Stomach (tissue), 19 donors: ENCODE measurements at regions of chr17 and their contacts with region 1.

Region 1: GRCh38 chr17:10844621-10845387 is 6.9 kb upstream of the PIRT start:
- DNase-seq: peak; percentile 90 to 95
- H3K4me3 ChIP-seq: peak overlapping the region; percentile 42 to 50 (median 48)
- H3K27ac ChIP-seq: peak overlapping the region; percentile 78 to 94 (median 86)
- H3K4me1 ChIP-seq: peaks cover 6 to 26% (median 23%) of the 10 kb centered on the region in 4 donors
- H3K27me3 ChIP-seq: peaks cover 0 to 4% (median 0%) of the 10 kb centered on the region in 3 donors
- CTCF ChIP-seq: peak in 6 of 7 experiments; percentile 83 to 98 (median 95)
- EP300 ChIP-seq: no peak
- POLR2A ChIP-seq: no peak

Region 2: DNA sequence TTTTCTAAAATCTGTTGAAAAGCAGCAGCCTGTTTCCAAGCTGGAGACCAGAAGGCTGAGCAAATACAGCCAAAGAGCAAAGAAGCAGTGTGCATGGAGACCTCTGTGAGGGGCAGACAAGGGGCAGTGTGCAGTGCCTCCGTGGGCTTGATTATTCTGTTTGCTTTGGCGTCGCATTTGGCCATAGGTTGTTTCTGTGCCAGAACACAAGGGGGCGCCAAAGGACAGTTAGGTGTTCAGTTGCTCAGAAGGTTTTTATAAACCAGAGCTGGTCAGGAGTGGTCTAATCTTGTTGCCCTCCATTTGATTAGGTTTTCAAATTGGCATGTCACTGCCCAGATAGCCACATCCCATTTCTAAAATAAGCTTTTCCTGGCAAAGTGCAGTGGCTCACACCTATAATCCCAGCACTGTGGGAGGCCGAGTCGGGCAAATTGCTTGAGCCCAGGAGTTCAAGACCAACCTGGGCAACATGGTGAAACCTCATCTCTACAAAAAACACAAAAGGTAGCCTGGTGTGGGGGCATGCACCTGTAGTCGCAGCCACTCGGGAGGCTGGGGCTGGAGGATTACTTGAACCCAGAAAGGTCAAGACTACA is 198.3 kb before region 1 on chr17:
- intact Hi-C with region 1: loop called (anchors 10 kb)
- DNase-seq: peak; percentile 82 to 93
- H3K4me3 ChIP-seq: no peak overlapping the region
- H3K27ac ChIP-seq: no peak overlapping the region
- H3K4me1 ChIP-seq: peaks cover 0 to 6% (median 2%) of the 10 kb centered on the region in 4 donors
- H3K27me3 ChIP-seq: no peaks in the 10 kb centered on the region
- CTCF ChIP-seq: peak in 5 of 7 experiments; percentile 74 to 84 (median 78)
- EP300 ChIP-seq: no peak
- POLR2A ChIP-seq: no peak

Region 3: GRCh38 chr17:10737168-10737622 is 107.6 kb before region 1 on chr17:
- intact Hi-C with region 1: loop called (anchors 5 kb)
- DNase-seq: peak; percentile 95 to 96
- H3K4me3 ChIP-seq: no peak overlapping the region
- H3K27ac ChIP-seq: peak overlapping the region; percentile 72 to 84 (median 75)
- H3K4me1 ChIP-seq: peaks cover 13 to 49% (median 33%) of the 10 kb centered on the region in 4 donors
- H3K27me3 ChIP-seq: no peaks in the 10 kb centered on the region
- CTCF ChIP-seq: peak in 5 of 7 experiments; percentile 65 to 96 (median 86)
- EP300 ChIP-seq: no peak
- POLR2A ChIP-seq: no peak

Region 4: GRCh38 chr17:10754109-10754508 is 90.7 kb before region 1 on chr17:
- intact Hi-C with region 1: loop called (anchors 5 kb)
- DNase-seq: peak; percentile 63 to 74
- H3K4me3 ChIP-seq: no peak overlapping the region
- H3K27ac ChIP-seq: peak overlapping the region in 2 of 5 donors; percentile 83 to 89
- H3K4me1 ChIP-seq: peaks cover 38 to 61% (median 52%) of the 10 kb centered on the region in 4 donors
- H3K27me3 ChIP-seq: no peaks in the 10 kb centered on the region
- CTCF ChIP-seq: peak in 3 of 7 experiments; percentile 25 to 34 (median 29)
- EP300 ChIP-seq: no peak
- POLR2A ChIP-seq: no peak